ENCODE measurements at regions of chr7 and their contacts with region 1.

Region 1: GRCh38 chr7:30974605-30975255 is 11.0 kb downstream of the GHRHR start:
- DNase-seq: peak; percentile 60
- ATAC-seq: peak; percentile 89

Region 2: DNA sequence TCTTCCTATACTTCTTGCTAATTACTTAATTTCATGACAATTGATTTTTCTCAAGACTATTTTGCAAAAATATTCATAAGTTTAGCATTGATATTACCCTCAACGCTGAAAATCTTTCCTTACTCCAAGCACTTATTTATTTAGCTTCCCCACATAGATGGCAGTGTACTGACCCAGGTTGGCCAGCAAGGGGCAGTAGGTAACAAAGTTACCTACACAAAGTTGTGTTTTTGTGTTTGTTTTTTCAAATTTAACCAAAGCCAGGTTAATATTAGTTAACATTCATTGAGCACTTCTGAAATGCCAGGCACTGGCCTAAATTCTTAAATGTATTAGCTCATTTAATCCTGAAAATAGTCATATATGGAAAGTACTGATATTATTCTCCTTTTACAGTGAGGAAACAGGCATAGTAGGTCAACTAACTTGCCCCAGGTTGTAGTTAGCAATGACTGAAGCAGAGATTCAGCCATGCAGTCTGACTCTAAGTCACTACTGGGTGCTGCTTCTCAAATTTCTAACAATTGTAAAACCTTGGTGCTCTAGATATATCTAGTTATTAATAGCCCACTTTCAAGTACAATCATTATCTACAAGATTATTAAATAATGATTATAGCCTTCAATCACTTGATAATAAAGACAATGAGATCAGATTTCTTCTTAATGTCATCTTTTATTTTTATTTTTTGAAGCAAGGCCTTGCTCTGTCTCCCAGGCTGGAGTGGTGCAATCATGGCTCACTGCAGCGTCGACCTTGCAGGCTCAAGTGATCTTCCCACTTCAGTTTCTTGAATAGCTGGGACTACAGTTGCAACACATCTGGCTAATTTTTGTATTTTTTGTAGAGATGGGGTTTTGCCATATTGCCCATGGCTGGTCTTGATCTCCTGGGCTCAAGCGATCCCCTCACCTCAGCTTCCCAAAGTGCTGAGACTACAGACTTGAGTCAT is 464.3 kb before region 1 on chr7:
- intact Hi-C with region 1: no loop called
- DNase-seq: no peak
- ATAC-seq: peak; percentile 66

Region 3: DNA sequence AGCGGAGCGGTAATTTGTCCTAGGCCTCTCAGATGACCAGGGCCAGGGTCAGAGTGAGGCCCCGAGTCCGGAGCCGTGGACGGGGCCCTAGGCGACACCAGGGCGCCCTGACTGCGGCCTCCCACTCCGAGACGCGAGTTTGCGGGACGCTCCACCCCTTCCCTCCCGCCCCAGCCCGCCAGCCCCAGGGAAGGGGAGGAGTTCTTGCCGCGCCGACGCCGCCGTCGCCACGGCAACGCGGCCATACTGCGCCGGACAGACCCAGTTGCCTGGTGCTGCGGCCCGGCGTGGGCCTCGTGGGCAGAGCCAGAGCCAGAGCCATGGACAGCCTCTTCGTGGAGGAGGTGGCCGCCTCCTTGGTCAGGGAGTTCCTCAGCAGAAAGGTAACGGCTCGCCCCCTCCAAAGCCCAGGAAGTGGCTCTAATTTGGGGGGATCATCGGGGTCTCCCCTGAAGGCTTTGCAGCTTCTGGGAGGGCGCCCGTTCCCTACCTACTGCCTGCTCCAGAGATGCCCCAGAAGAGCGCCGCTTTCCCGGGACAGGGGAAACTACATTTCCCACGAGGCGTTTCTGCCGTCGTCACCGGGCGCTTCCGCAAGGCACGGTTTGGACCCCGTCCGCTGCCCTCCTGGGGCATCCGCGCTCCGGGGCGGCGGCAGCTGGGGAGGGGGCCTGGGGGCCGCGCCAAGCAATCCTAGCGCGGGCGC is 203.4 kb before region 1 on chr7 and contains the start of gene MINDY4:
- intact Hi-C with region 1: no loop called
- DNase-seq: peak; percentile 92
- ATAC-seq: peak; percentile 98
- total RNA-seq, gene MINDY4: 2.8 TPM

Region 4: GRCh38 chr7:30800785-30801252 is 173.9 kb before region 1 on chr7:
- intact Hi-C with region 1: loop called (anchors 2 kb)
- DNase-seq: no peak
- ATAC-seq: peak; percentile 87